Caco-2 (cell line): ENCODE measurements at regions of chr10 and their contacts with region 1.

Region 1: DNA sequence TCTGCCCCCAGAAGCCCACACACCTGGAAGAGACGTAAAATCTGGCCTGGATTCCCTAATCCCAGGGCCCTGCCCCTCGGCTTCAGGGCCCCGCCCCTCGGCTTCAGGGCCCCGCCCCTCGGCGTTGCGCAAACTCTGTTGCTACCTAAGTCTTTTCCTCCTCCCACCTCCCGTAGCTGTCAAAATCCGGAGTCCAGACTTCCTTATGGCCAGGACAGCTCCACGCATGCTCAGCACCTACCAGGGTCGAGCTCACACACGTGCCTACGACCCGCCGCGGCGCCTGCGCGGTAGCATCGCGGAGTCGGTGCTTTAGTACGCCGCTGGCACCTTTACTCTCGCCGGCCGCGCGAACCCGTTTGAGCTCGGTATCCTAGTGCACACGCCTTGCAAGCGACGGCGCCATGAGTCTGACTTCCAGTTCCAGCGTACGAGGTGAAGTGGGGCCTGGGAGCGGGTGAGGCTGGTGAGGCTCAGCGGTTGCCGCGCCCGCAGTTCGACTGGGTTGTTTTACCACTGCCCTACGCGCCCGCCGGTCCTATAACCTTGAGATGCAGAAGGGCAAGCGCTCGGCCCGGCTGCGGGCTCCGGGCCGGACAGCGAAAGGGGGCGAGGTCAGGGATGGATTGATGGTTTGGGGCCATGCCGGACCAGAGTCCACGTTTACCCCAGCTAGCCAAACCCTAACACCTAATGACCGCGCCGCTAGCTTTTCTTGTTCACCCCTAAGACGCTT is at the start of gene CISD1:
- DNase-seq: peak; percentile 100
- H3K4me3 ChIP-seq: peak within 1 kb of the TSS; percentile 100
- H3K4me3 Mint-ChIP-seq: peak within 1 kb of the TSS; percentile 96
- H3K27ac Mint-ChIP-seq: peak within 1 kb of the TSS; percentile 98
- H3K4me1 ChIP-seq: peaks cover 18% of the 10 kb centered on the region
- H3K4me1 Mint-ChIP-seq: peaks cover 7% of the 10 kb centered on the region
- H3K27me3 ChIP-seq: no peaks in the 10 kb centered on the region
- H3K27me3 Mint-ChIP-seq: no peaks in the 10 kb centered on the region
- CTCF ChIP-seq: no peak
- total RNA-seq, gene CISD1: 98.3 and 99.3 TPM in 2 replicates

Region 2: DNA sequence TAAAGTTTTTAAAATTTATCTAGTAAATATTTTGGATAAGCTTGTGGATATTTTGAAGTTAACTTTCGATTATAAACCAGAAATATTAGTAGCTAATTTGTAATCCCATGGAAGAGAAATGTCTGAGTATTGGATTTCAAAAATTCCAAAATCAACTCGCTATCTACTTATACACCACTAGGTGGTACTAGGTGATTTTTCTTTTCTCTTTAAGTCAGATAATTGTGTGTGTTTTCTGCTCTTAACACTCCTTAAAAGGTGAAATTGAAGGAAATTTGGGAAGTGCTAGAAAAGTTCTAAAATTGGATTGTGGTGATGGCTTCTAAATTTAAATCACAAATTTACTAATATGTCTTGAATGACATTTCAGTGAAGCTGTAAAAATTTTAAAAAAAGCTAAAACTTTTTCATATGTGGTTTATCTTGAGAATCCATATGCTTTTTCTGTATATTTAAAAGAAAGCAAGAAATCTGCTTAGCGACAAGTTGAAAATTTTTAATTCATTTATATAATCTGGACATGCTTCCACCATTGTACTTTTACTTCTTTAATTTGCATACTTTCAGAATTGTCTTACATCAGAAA is 91.6 kb before region 1 on chr10:
- CTCF ChIA-PET with region 1: interaction called, 16 read pairs
- POLR2A ChIA-PET with region 1: no interaction called
- intact Hi-C with region 1: loop called (anchors 1 kb)
- DNase-seq: no peak
- H3K4me3 ChIP-seq: no peak overlapping the region
- H3K4me3 Mint-ChIP-seq: no peak overlapping the region
- H3K27ac Mint-ChIP-seq: no peak overlapping the region
- H3K4me1 ChIP-seq: no peaks in the 10 kb centered on the region
- H3K4me1 Mint-ChIP-seq: peaks cover 6% of the 10 kb centered on the region
- H3K27me3 ChIP-seq: no peaks in the 10 kb centered on the region; the same call in 1 of the 2 replicates
- H3K27me3 Mint-ChIP-seq: peaks cover 5% of the 10 kb centered on the region
- CTCF ChIP-seq: peak; percentile 75

Region 3: GRCh38 chr10:58239561-58240169 is 29.4 kb before region 1 on chr10:
- CTCF ChIA-PET with region 1: no interaction called
- POLR2A ChIA-PET with region 1: interaction called, 7 read pairs
- intact Hi-C with region 1: loop called (anchors 1 kb)
- DNase-seq: peak; percentile 48 to 57
- H3K4me3 ChIP-seq: no peak overlapping the region
- H3K4me3 Mint-ChIP-seq: peak overlapping the region; percentile 34
- H3K27ac Mint-ChIP-seq: peak overlapping the region; percentile 32
- H3K4me1 ChIP-seq: peaks cover 36% of the 10 kb centered on the region
- H3K4me1 Mint-ChIP-seq: peaks cover 46% of the 10 kb centered on the region
- H3K27me3 ChIP-seq: no peaks in the 10 kb centered on the region
- H3K27me3 Mint-ChIP-seq: no peaks in the 10 kb centered on the region
- CTCF ChIP-seq: no peak

Region 4: GRCh38 chr10:58291538-58292174 is 22.6 kb after region 1 on chr10:
- CTCF ChIA-PET with region 1: interaction called, 21 read pairs
- POLR2A ChIA-PET with region 1: no interaction called
- intact Hi-C with region 1: loop called (anchors 1 kb)
- DNase-seq: peak; percentile 58 to 79
- H3K4me3 ChIP-seq: no peak overlapping the region
- H3K4me3 Mint-ChIP-seq: no peak overlapping the region
- H3K27ac Mint-ChIP-seq: no peak overlapping the region
- H3K4me1 ChIP-seq: no peaks in the 10 kb centered on the region
- H3K4me1 Mint-ChIP-seq: peaks cover 6% of the 10 kb centered on the region
- H3K27me3 ChIP-seq: no peaks in the 10 kb centered on the region
- H3K27me3 Mint-ChIP-seq: no peaks in the 10 kb centered on the region
- CTCF ChIP-seq: peak; percentile 94 to 96

Region 5: GRCh38 chr10:58384999-58385783 is 116.2 kb after region 1 on chr10 and contains the start of gene TFAM:
- CTCF ChIA-PET with region 1: interaction called, 9 read pairs
- POLR2A ChIA-PET with region 1: interaction called, 3 read pairs
- intact Hi-C with region 1: loop called (anchors 1 kb)
- DNase-seq: peak; percentile 99 to 100
- H3K4me3 ChIP-seq: peak within 1 kb of the TSS; percentile 83
- H3K4me3 Mint-ChIP-seq: peak within 1 kb of the TSS; percentile 87
- H3K27ac Mint-ChIP-seq: peak within 1 kb of the TSS; percentile 80
- H3K4me1 ChIP-seq: no peaks in the 10 kb centered on the region; the same call in 1 of the 2 replicates
- H3K4me1 Mint-ChIP-seq: peaks cover 9% of the 10 kb centered on the region
- H3K27me3 ChIP-seq: no peaks in the 10 kb centered on the region
- H3K27me3 Mint-ChIP-seq: no peaks in the 10 kb centered on the region
- CTCF ChIP-seq: peak; percentile 71 to 98
- total RNA-seq, gene TFAM: 228 and 240 TPM in 2 replicates